Right ventricle myocardium inferior (tissue), 1 donor: ENCODE measurements at regions of chr5 and their contacts with region 1.

Region 1: GRCh38 chr5:62431735-62432620 is 19.4 kb downstream of the IPO11 start:
- DNase-seq: no peak
- ATAC-seq: peak; percentile 85

Region 2: GRCh38 chr5:62403434-62404250 is 28.3 kb before region 1 on chr5 and contains the start of gene DIMT1:
- intact Hi-C with region 1: loop called (anchors 2 kb)
- DNase-seq: peak; percentile 97
- ATAC-seq: peak; percentile 100
- total RNA-seq, gene DIMT1: 16.4 TPM